Dorsolateral prefrontal cortex (tissue), 120 donors: ENCODE measurements at regions of chr2 and their contacts with region 1.

Region 1: GRCh38 chr2:235433860-235434259 is 60.0 kb upstream of the AGAP1 start:
- DNase-seq: peak in 7 of 10 donors; percentile 44 to 83 (median 61)
- H3K4me3 ChIP-seq: peak overlapping the region in 26 of 59 donors; percentile 0 to 55 (median 28)
- H3K27ac ChIP-seq: peak overlapping the region in 44 of 59 donors; percentile 0 to 77 (median 36)
- H3K27me3 ChIP-seq: no peaks in the 10 kb centered on the region
- CTCF ChIP-seq: peak in 52 of 56 donors; percentile 9 to 72 (median 41)

Region 2: GRCh38 chr2:235551965-235552364 is 118.1 kb after region 1 on chr2:
- intact Hi-C with region 1: loop called in 1 of 2 experiments (anchors 10 kb)
- DNase-seq: peak; percentile 50 to 79 (median 70)
- H3K4me3 ChIP-seq: peak overlapping the region in 9 of 59 donors; percentile 1 to 38 (median 18)
- H3K27ac ChIP-seq: peak overlapping the region in 16 of 59 donors; percentile 5 to 73 (median 44)
- H3K27me3 ChIP-seq: no peaks in the 10 kb centered on the region
- CTCF ChIP-seq: peak; percentile 13 to 87 (median 65)

Region 3: GRCh38 chr2:235639428-235639773 is 205.5 kb after region 1 on chr2:
- intact Hi-C with region 1: no loop called
- DNase-seq: peak; percentile 33 to 97 (median 92)
- H3K4me3 ChIP-seq: peak overlapping the region in 34 of 59 donors; percentile 4 to 57 (median 28)
- H3K27ac ChIP-seq: peak overlapping the region; percentile 74 to 99 (median 96)
- H3K27me3 ChIP-seq: no peaks in the 10 kb centered on the region
- CTCF ChIP-seq: peak in 1 of 56 donors; percentile 5

Region 4: GRCh38 chr2:235754352-235755207 is 320.7 kb after region 1 on chr2:
- intact Hi-C with region 1: loop called in 1 of 2 experiments (anchors 10 kb)
- DNase-seq: peak in 1 of 10 donors; percentile 23
- H3K4me3 ChIP-seq: no peak overlapping the region
- H3K27ac ChIP-seq: peak overlapping the region in 25 of 59 donors; percentile 0 to 64 (median 38)
- H3K27me3 ChIP-seq: no peaks in the 10 kb centered on the region
- CTCF ChIP-seq: no peak